ENCODE measurements at regions of chr19 and their contacts with region 1.

Region 1: GRCh38 chr19:36054119-36054732 is at the start of gene THAP8:
- DNase-seq: peak; percentile 98
- ATAC-seq: peak; percentile 83
- H3K4me3 Mint-ChIP-seq: peak within 1 kb of the TSS; percentile 93
- H3K27ac Mint-ChIP-seq: peak within 1 kb of the TSS; percentile 93
- H3K4me1 Mint-ChIP-seq: peaks cover 18% of the 10 kb centered on the region
- H3K27me3 Mint-ChIP-seq: no peaks in the 10 kb centered on the region
- CTCF ChIP-seq: no peak
- total RNA-seq, gene THAP8: 2.3 and 2.4 TPM in 2 replicates

Region 2: GRCh38 chr19:34926685-34927375 is 1127.4 kb before region 1 on chr19 and contains the start of gene ZNF30:
- CTCF ChIA-PET with region 1: no interaction called
- POLR2A ChIA-PET with region 1: interaction called, 10 read pairs
- intact Hi-C with region 1: no loop called
- DNase-seq: peak; percentile 75
- ATAC-seq: peak; percentile 98
- H3K4me3 Mint-ChIP-seq: peak within 1 kb of the TSS; percentile 93
- H3K27ac Mint-ChIP-seq: peak within 1 kb of the TSS; percentile 75
- H3K4me1 Mint-ChIP-seq: peaks cover 14% of the 10 kb centered on the region
- H3K27me3 Mint-ChIP-seq: peaks cover 3% of the 10 kb centered on the region
- CTCF ChIP-seq: no peak
- total RNA-seq, gene ZNF30: 2.7 and 4.0 TPM in 2 replicates

Region 3: GRCh38 chr19:35702223-35703012 is 351.8 kb before region 1 on chr19:
- CTCF ChIA-PET with region 1: no interaction called
- POLR2A ChIA-PET with region 1: no interaction called
- intact Hi-C with region 1: loop called (anchors 2 kb)
- DNase-seq: peak; percentile 82
- ATAC-seq: peak; percentile 99
- H3K4me3 Mint-ChIP-seq: peak overlapping the region; percentile 98
- H3K27ac Mint-ChIP-seq: peak overlapping the region; percentile 96
- H3K4me1 Mint-ChIP-seq: peaks cover 7% of the 10 kb centered on the region
- H3K27me3 Mint-ChIP-seq: no peaks in the 10 kb centered on the region
- CTCF ChIP-seq: no peak

Region 4: DNA sequence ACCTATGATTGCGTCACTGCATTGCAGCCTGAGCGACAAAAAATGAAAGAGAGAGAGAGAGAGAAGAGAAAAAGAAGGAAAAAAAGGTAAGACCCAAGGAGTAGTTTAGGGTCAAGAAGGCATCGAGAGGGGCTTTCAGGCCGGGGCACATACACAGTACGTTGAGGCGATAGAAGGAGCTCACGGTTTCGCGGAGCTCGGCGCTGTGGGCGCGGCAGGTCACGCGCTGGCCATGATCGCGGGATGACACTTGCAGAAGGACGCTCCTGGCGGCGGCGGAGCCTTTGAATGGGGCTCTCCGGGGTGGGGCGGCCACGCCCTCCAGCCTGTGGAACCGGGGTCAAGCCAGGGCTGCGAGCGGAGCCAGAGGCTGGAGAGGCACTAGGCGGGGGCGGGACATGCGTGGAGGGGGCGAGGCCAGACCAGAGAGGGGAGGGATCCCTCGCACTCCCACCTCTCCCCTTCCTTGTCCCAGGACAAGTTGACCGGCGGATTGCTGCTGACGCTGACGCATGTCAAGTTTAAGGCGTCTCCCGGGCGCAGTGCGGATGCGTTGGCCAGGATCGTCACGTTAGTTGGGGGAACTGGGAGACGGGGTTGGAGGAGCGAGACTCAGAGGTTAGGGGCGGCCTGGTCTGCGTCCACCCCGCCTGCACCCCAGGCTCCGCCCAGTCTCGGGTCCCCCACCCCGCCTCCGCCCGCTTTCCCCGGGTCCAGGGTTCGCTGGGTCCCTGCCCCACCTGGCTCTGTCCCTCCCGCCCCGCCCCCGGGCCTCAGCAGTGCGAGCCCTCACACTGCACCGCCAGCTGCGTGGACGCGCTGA is 208.8 kb before region 1 on chr19:
- CTCF ChIA-PET with region 1: no interaction called
- POLR2A ChIA-PET with region 1: no interaction called
- intact Hi-C with region 1: no loop called
- DNase-seq: no peak
- ATAC-seq: peak; percentile 28
- H3K4me3 Mint-ChIP-seq: peak overlapping the region; percentile 64
- H3K27ac Mint-ChIP-seq: no peak overlapping the region
- H3K4me1 Mint-ChIP-seq: peaks cover 16% of the 10 kb centered on the region
- H3K27me3 Mint-ChIP-seq: peaks cover 52% of the 10 kb centered on the region
- CTCF ChIP-seq: no peak

Region 5: GRCh38 chr19:35899547-35900214 is 154.5 kb before region 1 on chr19:
- CTCF ChIA-PET with region 1: no interaction called
- POLR2A ChIA-PET with region 1: no interaction called
- intact Hi-C with region 1: loop called (anchors 1 kb)
- DNase-seq: peak; percentile 93
- ATAC-seq: peak; percentile 57
- H3K4me3 Mint-ChIP-seq: peak overlapping the region; percentile 95
- H3K27ac Mint-ChIP-seq: peak overlapping the region; percentile 95
- H3K4me1 Mint-ChIP-seq: peaks cover 77% of the 10 kb centered on the region
- H3K27me3 Mint-ChIP-seq: no peaks in the 10 kb centered on the region
- CTCF ChIP-seq: no peak

Region 6: GRCh38 chr19:35986664-35987570 is 67.3 kb before region 1 on chr19:
- CTCF ChIA-PET with region 1: no interaction called
- POLR2A ChIA-PET with region 1: no interaction called
- intact Hi-C with region 1: loop called (anchors 2 kb)
- DNase-seq: peak; percentile 46
- ATAC-seq: peak; percentile 93
- H3K4me3 Mint-ChIP-seq: peak overlapping the region; percentile 91
- H3K27ac Mint-ChIP-seq: peak overlapping the region; percentile 41
- H3K4me1 Mint-ChIP-seq: peaks cover 8% of the 10 kb centered on the region
- H3K27me3 Mint-ChIP-seq: peaks cover 30% of the 10 kb centered on the region
- CTCF ChIP-seq: no peak

Region 7: GRCh38 chr19:36014029-36014924 is 39.9 kb before region 1 on chr19 and contains the start of gene ALKBH6:
- CTCF ChIA-PET with region 1: no interaction called
- POLR2A ChIA-PET with region 1: interaction called, 31 read pairs
- intact Hi-C with region 1: loop called (anchors 1 kb)
- DNase-seq: peak; percentile 94
- ATAC-seq: peak; percentile 99
- H3K4me3 Mint-ChIP-seq: peak within 1 kb of the TSS; percentile 98
- H3K27ac Mint-ChIP-seq: peak within 1 kb of the TSS; percentile 95
- H3K4me1 Mint-ChIP-seq: peaks cover 29% of the 10 kb centered on the region
- H3K27me3 Mint-ChIP-seq: no peaks in the 10 kb centered on the region
- CTCF ChIP-seq: no peak
- total RNA-seq, gene ALKBH6: 32.7 and 39.7 TPM in 2 replicates

Region 8: DNA sequence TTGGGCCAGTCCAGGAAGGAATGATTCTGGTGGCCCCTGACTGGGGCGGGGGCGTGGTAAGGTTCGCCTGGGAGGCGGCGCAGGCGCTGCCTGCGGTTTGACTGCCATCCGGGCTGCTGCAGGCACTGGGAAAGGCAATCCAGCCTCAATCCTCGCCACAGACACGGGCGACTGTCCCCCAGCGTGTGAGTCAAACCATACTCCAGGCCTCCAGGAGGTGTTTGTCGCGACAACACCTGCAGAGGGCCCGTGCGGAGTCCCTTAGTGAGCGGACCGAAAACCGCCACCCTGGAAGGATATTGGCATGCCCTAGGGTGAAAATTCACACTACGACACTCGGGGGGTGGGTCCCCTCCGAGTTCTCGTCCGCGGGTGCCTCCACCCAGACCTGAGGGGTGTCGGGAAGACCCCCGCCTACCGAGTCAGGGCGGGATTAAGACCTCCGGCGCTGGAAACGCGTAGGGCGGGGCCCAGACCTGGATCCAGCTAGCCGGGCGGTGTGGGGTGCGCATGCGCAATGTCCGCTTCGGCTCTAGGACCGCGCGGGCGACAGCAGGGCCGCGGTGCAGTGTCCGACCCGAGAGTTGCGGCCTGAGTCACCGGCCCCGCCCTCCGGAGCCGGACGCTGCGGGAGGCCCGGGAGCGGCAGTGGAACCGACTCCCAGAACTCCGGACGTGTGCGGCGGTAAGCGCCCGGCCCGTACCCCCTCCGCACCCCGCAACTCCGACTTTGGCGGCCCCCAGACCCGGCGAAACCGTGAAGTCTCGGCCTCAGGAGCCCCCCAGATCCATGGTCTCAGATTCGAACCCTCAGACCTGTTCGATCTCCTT is 85.5 kb after region 1 on chr19 and contains the start of gene CAPNS1:
- CTCF ChIA-PET with region 1: no interaction called
- POLR2A ChIA-PET with region 1: interaction called, 7 read pairs
- intact Hi-C with region 1: loop called (anchors 1 kb)
- DNase-seq: peak; percentile 93
- ATAC-seq: peak; percentile 76
- H3K4me3 Mint-ChIP-seq: peak within 1 kb of the TSS; percentile 97
- H3K27ac Mint-ChIP-seq: peak within 1 kb of the TSS; percentile 97
- H3K4me1 Mint-ChIP-seq: peaks cover 16% of the 10 kb centered on the region
- H3K27me3 Mint-ChIP-seq: peaks cover 2% of the 10 kb centered on the region
- CTCF ChIP-seq: no peak
- total RNA-seq, gene CAPNS1: 442 and 477 TPM in 2 replicates

Region 9: DNA sequence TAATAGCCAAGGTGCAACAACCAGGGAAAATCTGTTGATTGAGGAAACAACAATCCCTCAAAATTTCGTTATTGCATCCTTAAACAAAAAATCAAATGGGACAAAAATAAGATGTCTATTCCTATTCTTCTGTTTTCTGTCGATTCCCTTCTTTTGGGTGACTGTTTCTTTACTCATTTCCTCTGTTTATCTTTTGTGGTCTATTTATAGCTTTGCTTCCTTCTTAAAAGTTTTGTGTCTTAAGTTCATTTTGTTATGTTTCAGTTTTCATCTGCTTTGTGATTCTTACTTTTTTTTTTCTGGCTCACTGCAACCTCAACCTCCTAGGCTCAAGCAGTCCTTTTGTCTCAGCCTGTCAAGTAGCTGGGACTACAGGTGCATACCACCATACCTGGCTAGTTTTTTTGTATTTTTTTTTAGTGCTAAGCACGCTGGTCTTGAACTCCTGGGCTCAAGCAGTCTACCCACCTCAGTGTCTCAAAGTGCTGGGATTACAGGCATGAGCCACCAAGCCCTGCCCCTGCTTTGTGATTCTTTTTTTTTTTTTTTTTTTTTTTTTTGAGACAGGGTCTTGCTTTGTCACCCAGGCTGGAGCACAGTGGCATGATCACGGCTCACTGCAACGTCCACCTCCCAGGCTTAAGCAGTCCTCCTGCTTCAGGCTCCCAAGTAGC is 171.1 kb after region 1 on chr19:
- CTCF ChIA-PET with region 1: no interaction called
- POLR2A ChIA-PET with region 1: no interaction called
- intact Hi-C with region 1: no loop called
- DNase-seq: no peak
- ATAC-seq: no peak
- H3K4me3 Mint-ChIP-seq: no peak overlapping the region
- H3K27ac Mint-ChIP-seq: no peak overlapping the region
- H3K4me1 Mint-ChIP-seq: peaks cover 21% of the 10 kb centered on the region
- H3K27me3 Mint-ChIP-seq: no peaks in the 10 kb centered on the region
- CTCF ChIP-seq: no peak